ENCODE measurements at regions of chr20 and their contacts with region 1.

Region 1: DNA sequence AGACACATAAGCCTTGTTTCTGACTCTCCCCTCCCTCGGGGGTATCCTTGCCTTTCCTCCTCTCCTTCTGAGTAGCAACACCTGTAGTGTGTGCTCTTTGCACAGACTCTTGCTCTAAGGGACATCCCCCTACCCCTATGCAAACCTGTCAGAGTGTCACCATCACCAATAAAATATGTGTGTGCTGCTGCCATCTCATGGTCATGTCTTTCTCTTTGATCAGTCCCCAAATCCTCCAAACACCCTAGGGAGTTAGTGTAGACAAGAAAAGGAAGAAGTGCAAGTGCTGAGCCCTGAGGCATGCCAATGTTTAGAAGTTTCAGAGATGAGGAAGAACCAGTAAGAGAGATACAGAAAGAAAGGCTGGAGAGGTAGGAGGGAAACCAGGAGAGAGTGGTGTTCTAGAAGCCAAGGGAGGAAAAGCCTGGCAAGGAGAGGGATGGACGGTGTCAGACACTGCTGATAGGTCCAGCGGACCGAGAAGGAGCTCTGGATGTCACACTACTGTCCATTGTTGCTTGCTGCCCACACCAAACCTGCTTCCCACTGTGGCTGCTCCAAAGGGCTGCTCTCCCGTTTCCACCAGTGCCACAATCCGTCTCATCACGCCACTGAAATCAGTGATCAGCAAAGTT is 16.4 kb downstream of the TRMT6 start:
- DNase-seq: no peak
- ATAC-seq: peak; percentile 79

Region 2: GRCh38 chr20:5797843-5798462 is 136.0 kb before region 1 on chr20:
- intact Hi-C with region 1: loop called (anchors 10 kb)
- DNase-seq: peak; percentile 58
- ATAC-seq: no peak

Region 3: DNA sequence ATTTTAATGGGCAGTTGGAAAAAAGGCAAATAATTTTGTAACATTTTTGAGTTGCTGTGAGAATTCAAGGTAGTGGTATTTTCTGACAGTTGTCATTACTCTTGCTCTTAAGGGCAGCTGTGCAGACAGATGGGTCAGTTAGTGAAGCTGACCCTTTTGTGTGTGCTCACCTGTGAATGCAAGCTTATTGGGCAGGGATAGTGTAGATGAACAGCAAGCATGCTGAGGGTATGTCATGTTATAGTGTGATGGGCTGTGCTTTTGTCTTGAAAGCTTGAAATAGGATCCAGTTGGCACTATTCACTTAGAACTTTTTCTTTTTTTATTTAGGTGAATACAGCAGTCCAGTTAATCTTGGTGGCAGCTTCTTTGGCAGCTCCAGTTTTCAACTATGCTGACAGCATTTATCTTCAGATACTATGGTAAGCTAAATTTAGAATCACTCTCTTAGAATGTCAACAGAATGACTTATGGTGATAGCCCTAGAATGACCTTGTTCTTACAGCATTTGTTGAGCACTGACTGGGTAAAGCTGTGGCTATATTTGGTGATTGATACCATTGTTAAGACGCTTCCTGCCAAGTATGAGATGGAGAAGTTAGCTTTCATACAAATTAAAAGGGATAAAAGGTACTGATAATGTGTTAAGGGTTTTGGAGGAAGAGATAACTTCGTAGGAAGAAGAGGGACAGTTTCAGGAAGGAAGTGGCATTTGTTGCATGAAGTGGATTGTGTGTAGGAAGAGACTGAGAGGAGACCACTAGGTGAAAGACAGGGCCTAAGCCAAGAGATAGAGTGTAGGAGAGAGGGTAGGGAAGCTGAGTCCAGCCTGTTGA is 100.4 kb after region 1 on chr20:
- intact Hi-C with region 1: no loop called
- DNase-seq: no peak
- ATAC-seq: peak; percentile 88

Region 4: GRCh38 chr20:6074145-6074561 is 140.2 kb after region 1 on chr20:
- intact Hi-C with region 1: no loop called
- DNase-seq: no peak
- ATAC-seq: peak; percentile 87